ENCODE measurements at regions of chr7 and their contacts with region 1.

Region 1: GRCh38 chr7:116525913-116526861 is 1.4 kb downstream of the CAV1 start:
- DNase-seq: peak; percentile 79
- ATAC-seq: peak; percentile 76
- H3K4me3 Mint-ChIP-seq: peak overlapping the region; percentile 95
- H3K27ac Mint-ChIP-seq: peak overlapping the region; percentile 89
- H3K4me1 Mint-ChIP-seq: peaks cover 58% of the 10 kb centered on the region
- H3K27me3 Mint-ChIP-seq: peaks cover 24% of the 10 kb centered on the region
- CTCF ChIP-seq: peak; percentile 82

Region 2: DNA sequence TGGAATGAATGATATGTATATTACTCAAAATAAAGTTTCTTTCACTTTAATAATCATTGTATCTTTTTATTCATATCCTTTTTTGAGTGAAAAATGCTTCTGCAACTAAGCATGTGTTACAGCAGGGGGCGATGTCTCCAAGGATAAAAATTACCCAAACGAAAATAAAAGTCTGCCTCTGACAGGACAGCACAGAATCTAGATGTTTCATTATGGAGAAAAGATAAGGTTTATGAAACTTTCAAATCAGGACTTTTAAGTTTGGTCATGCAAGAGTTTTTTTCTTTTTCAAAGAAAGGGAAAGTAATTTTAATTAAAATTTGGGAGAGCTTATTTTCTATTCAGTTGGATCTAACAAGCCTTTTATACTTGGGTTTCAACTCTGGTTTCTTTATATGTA is 267.5 kb before region 1 on chr7:
- CTCF ChIA-PET with region 1: interaction called, 27 read pairs
- POLR2A ChIA-PET with region 1: no interaction called
- DNase-seq: no peak
- ATAC-seq: no peak; the same call in 1 of the 2 replicates
- H3K4me3 Mint-ChIP-seq: no peak overlapping the region
- H3K27ac Mint-ChIP-seq: no peak overlapping the region
- H3K4me1 Mint-ChIP-seq: 0 out of 2 replicates have a peak, but pooled peaks cover under 1% of the 10 kb centered on the region
- H3K27me3 Mint-ChIP-seq: no peaks in the 10 kb centered on the region
- CTCF ChIP-seq: peak; percentile 73

Region 3: GRCh38 chr7:116499168-116500077 is 26.8 kb before region 1 on chr7 and contains the start of gene CAV2:
- CTCF ChIA-PET with region 1: interaction called, 18 read pairs
- POLR2A ChIA-PET with region 1: interaction called, 4 read pairs
- DNase-seq: peak; percentile 51
- ATAC-seq: peak; percentile 57
- H3K4me3 Mint-ChIP-seq: peak within 1 kb of the TSS; percentile 86
- H3K27ac Mint-ChIP-seq: no peak within 1 kb of the TSS
- H3K4me1 Mint-ChIP-seq: peaks cover 16% of the 10 kb centered on the region
- H3K27me3 Mint-ChIP-seq: peaks cover 34% of the 10 kb centered on the region
- CTCF ChIP-seq: no peak
- total RNA-seq, gene CAV2: 1.9 to 4.3 TPM (median 2.4 TPM) in 3 replicates

Region 4: DNA sequence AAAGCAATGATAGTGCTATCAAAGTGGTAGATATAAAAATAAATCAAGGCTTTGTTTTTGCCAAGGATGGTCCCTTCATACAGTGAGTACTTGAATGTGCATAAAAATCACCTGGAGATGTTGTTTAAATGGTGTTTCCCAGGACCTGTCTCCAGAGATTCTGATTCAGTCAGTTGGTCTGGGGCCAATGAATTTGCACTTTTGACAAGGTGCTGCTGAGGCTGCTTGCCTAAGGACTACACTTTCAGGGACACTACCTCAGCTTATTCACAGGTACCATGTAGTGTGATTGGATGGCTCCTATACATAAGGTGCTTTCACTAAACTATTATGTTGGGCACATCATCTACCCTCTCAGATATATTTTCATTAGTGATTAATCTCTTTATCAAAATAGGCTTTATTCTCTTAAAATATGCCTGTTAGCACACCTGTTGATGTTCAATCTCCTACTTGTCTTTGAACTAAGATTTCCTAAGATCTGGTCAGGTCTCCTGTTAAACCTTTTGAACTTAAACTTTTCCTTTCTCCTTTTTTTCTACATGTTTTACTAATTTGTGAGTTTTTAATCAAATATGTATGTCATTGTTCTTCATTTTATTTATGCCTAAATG is 360.5 kb after region 1 on chr7:
- CTCF ChIA-PET with region 1: no interaction called
- POLR2A ChIA-PET with region 1: no interaction called
- DNase-seq: no peak
- ATAC-seq: no peak
- H3K4me3 Mint-ChIP-seq: no peak overlapping the region
- H3K27ac Mint-ChIP-seq: no peak overlapping the region
- H3K4me1 Mint-ChIP-seq: peaks cover 30% of the 10 kb centered on the region
- H3K27me3 Mint-ChIP-seq: no peaks in the 10 kb centered on the region
- CTCF ChIP-seq: no peak

Measured in WTC11 (cell line).